Ascending aorta (tissue), 2 donors: ENCODE measurements at regions of chr4 and their contacts with region 1.

Region 1: GRCh38 chr4:128386761-128387599 is 99.4 kb upstream of the PGRMC2 start:
- DNase-seq: peak; percentile 63 to 95
- H3K4me3 ChIP-seq: peak overlapping the region in 1 of 2 donors; percentile 38
- H3K27ac ChIP-seq: peak overlapping the region; percentile 58 to 69
- H3K4me1 ChIP-seq: peaks cover 0 to 21% of the 10 kb centered on the region in 2 donors
- H3K27me3 ChIP-seq: no peaks in the 10 kb centered on the region
- CTCF ChIP-seq: no peak

Region 2: GRCh38 chr4:128371001-128371777 is 15.8 kb before region 1 on chr4:
- intact Hi-C with region 1: loop called (anchors 2 kb)
- DNase-seq: no peak
- H3K4me3 ChIP-seq: no peak overlapping the region
- H3K27ac ChIP-seq: peak overlapping the region; percentile 63 to 64
- H3K4me1 ChIP-seq: peaks cover 12 to 20% of the 10 kb centered on the region in 2 donors
- H3K27me3 ChIP-seq: no peaks in the 10 kb centered on the region
- CTCF ChIP-seq: no peak

Region 3: GRCh38 chr4:129093191-129093920 is 706.4 kb after region 1 on chr4 and contains the start of gene SCLT1:
- intact Hi-C with region 1: loop called (anchors 2 kb)
- DNase-seq: peak; percentile 92 to 99
- H3K4me3 ChIP-seq: peak within 1 kb of the TSS; percentile 74 to 75
- H3K27ac ChIP-seq: peak within 1 kb of the TSS; percentile 91 to 92
- H3K4me1 ChIP-seq: peaks cover 0 to 14% of the 10 kb centered on the region in 2 donors
- H3K27me3 ChIP-seq: no peaks in the 10 kb centered on the region
- CTCF ChIP-seq: no peak
- total RNA-seq, gene SCLT1: 7.0 TPM